Activated T-helper 1 cell treated with anti-CD3 and anti-CD28 coated beads, Interleukin-12 subunit alpha, Interleukin-12 subunit beta, Interleukin-2, Interleukin-4 antibody, amounts not matched to agents 30 ng/mL and 10 ng/mL and 1 ng/mL, durations not matched to agents 14 hours and 24 hours and 36 hours (primary cell): ENCODE measurements at regions of chr7 and their contacts with region 1.

Region 1: GRCh38 chr7:99997545-99998137 is 17.8 kb upstream of the ZKSCAN1 start:
- DNase-seq: peak; percentile 69
- H3K4me3 Mint-ChIP-seq: peak overlapping the region; percentile 77
- H3K27ac Mint-ChIP-seq: peak overlapping the region; percentile 89
- H3K4me1 Mint-ChIP-seq: peaks cover 10% of the 10 kb centered on the region
- H3K27me3 Mint-ChIP-seq: peaks cover 5% of the 10 kb centered on the region

Region 2: GRCh38 chr7:99551767-99552463 is 445.7 kb before region 1 on chr7 and contains the start of gene FAM200A:
- intact Hi-C with region 1: loop called (anchors 10 kb)
- DNase-seq: peak; percentile 75
- H3K4me3 Mint-ChIP-seq: peak within 1 kb of the TSS; percentile 90
- H3K27ac Mint-ChIP-seq: peak within 1 kb of the TSS; percentile 31
- H3K4me1 Mint-ChIP-seq: peaks cover 31% of the 10 kb centered on the region
- H3K27me3 Mint-ChIP-seq: no peaks in the 10 kb centered on the region
- total RNA-seq, gene FAM200A: 4.7 and 5.2 TPM in 2 replicates

Region 3: GRCh38 chr7:99616359-99617191 is 381.1 kb before region 1 on chr7 and contains the start of gene ZSCAN25:
- intact Hi-C with region 1: loop called (anchors 10 kb)
- DNase-seq: peak; percentile 79
- H3K4me3 Mint-ChIP-seq: peak within 1 kb of the TSS; percentile 96
- H3K27ac Mint-ChIP-seq: peak within 1 kb of the TSS; percentile 94
- H3K4me1 Mint-ChIP-seq: peaks cover 56% of the 10 kb centered on the region
- H3K27me3 Mint-ChIP-seq: peaks cover 4% of the 10 kb centered on the region
- total RNA-seq, gene ZSCAN25: 31.5 and 32.9 TPM in 2 replicates

Region 4: DNA sequence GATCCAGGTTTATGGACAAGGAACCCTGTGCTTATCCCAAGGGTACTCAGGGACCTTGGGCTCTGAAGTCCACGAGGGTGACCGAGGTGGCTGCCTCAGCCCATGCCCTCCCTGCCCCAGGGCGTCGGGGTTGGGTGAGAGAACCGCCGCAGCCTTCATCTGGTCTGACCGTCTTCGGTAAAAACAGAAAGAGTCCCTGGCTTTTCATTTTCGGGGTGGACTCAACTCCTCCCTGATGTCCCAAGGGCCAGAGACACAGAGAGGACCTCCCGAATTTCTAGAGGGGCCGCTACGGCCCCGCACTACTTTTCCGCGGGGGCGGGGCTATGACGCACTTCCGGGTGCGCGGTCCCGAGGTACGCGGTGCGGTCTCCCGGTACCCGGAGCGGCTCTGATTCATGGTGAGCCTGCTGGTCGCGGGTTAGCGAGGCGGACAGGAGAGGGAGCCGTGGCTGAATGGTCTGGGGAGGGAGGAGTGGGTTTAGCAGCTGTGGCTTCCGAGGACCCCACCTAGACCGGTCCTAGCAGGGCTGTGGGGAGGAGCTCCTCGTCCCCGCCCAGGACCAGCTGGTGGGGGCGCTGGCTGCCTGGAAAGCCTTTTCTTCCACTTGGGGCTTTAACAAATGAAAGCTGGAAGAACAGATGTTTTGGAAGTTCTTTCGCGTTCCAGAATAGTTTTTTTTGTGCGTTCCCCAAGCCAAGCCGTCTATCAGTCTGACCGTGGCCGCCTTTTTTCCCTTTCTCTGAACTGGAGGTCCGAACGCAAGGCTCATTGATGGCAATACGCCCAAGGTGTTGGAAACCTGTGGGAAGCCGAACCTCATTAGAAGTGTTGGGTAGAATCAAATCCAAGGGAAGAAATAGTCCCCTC is 52.0 kb after region 1 on chr7 and contains the start of gene ZSCAN21:
- intact Hi-C with region 1: loop called (anchors 1 kb)
- DNase-seq: peak; percentile 79
- H3K4me3 Mint-ChIP-seq: peak within 1 kb of the TSS; percentile 88
- H3K27ac Mint-ChIP-seq: peak within 1 kb of the TSS; percentile 92
- H3K4me1 Mint-ChIP-seq: peaks cover 13% of the 10 kb centered on the region
- H3K27me3 Mint-ChIP-seq: peaks cover 2% of the 10 kb centered on the region
- total RNA-seq, gene ZSCAN21: 6.8 and 9.8 TPM in 2 replicates